GM12878 (cell line): ENCODE measurements at regions of chr5 and their contacts with region 1.

Region 1: GRCh38 chr5:62284946-62285891 is 20.8 kb upstream of the KIF2A start:
- DNase-seq: peak; percentile 71
- ATAC-seq: peak; percentile 81
- H3K4me3 ChIP-seq: no peak overlapping the region
- H3K27ac ChIP-seq: peak overlapping the region; percentile 10
- H3K4me1 ChIP-seq: peaks cover 12% of the 10 kb centered on the region
- H3K27me3 ChIP-seq: no peaks in the 10 kb centered on the region
- CTCF ChIP-seq: no peak
- EP300 ChIP-seq: no peak; a peak in 1 of 4 replicates
- POLR2A ChIP-seq: no peak
- RAD21 ChIP-seq: no peak

Region 2: DNA sequence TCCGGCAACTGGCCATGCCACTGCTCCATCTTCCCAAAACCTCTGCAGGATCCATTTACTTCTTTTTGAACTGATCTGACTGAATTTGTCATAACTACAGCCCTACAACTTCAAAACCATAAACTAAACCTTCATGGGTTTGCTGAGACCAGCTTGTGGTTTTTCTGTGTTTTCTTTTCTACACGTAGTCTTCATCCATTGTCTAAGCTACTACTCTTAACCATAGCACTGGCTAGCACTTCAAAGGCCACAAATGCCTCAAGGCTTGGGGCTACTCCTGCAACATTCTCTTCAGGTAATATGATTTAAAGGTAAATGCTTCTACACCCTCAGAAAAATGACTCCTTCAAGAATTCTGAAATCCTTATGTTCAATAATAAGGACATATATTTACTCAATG is 11.8 kb after region 1 on chr5:
- CTCF ChIA-PET with region 1: interaction called, 7 read pairs
- POLR2A ChIA-PET with region 1: interaction called, 4 read pairs
- RAD21 ChIA-PET with region 1: no interaction called
- SMC1A ChIA-PET with region 1: interaction called, 16 read pairs
- in situ Hi-C with region 1: no loop called
- intact Hi-C with region 1: no loop called
- DNase-seq: no peak
- ATAC-seq: peak; percentile 31; the same call in 1 of the 3 replicates
- H3K4me3 ChIP-seq: no peak overlapping the region
- H3K27ac ChIP-seq: no peak overlapping the region
- H3K4me1 ChIP-seq: no peaks in the 10 kb centered on the region
- H3K27me3 ChIP-seq: no peaks in the 10 kb centered on the region
- CTCF ChIP-seq: no peak
- EP300 ChIP-seq: no peak
- POLR2A ChIP-seq: no peak
- RAD21 ChIP-seq: no peak